Left ventricle myocardium inferior (tissue), 1 donor: ENCODE measurements at regions of chr12 and their contacts with region 1.

Region 1: DNA sequence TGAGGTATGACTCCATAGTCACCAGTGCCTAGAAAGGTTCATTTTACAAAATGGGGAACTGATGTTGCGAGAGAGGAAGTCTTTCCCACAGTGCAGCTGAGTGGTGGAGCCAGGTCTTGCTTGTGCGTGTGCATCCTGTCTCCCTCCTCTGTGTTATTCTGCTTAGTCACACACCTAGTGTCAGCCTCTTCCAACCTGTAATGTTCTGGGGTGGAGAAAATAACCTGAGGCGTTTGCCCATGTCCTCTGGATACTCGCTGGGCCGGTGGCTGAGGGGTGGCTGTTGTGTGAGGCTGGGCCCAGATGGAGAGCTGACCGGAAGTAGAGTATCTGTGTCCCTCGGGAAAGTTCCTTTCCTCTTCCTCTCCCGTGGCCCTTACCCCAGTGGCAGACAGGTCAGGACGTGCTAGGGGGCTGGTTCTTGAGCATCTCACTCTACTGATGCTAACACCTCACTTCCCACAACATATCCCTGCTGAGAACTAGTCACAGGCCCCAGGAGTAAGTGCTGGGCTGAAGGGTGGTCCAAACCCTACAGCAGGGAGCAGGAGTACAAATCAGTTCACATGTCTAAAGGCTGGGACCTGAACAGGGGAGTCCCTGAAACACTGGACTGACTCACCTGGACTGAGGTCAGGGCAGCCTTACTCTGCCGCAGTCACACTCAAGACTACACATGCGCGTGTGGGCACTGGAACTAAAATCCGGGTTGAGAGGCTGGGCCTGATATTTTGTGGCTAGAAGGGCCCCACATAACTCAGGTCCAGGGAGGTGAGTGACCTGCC is 7.0 kb downstream of the MLF2 start:
- DNase-seq: no peak
- H3K4me3 ChIP-seq: no peak overlapping the region
- H3K27ac ChIP-seq: peak overlapping the region; percentile 56
- H3K4me1 ChIP-seq: peaks cover 13% of the 10 kb centered on the region
- H3K27me3 ChIP-seq: no peaks in the 10 kb centered on the region
- CTCF ChIP-seq: no peak

Region 2: DNA sequence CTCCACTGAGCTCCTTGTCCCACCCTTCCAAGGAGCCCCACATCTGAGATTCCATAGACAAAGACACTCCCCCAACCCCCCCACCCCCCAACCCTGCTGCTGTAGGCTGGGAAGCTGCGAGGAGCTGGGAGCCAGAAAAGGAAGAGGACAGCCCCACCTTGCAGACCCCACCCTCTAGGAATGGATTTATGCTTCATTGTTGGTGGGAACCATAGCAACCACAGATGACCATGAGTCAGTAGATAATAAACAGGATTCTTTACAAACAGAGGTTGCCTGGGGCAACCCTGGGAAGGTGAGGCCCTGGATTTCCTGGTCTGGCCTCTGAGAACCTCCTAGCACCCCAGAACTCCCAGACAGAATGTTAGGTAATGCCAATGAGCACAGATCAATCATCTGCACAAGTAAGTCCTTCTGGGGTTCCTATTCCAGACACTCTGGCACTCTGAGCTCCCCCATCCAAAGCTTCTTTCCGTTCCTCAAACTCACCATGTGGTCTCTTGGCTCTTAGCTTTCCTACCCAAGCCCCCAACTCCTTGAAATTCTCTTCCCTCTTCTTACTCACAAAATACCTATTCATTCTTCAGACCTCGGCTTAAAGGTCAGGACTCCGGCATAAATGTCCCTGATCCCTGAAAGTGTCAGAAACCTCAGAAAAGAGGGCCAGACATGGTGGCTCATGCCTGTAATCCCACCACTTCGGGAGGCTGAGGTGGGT is 450.7 kb before region 1 on chr12:
- intact Hi-C with region 1: no loop called
- DNase-seq: no peak
- H3K4me3 ChIP-seq: no peak overlapping the region
- H3K27ac ChIP-seq: peak overlapping the region; percentile 77
- H3K4me1 ChIP-seq: peaks cover 27% of the 10 kb centered on the region
- H3K27me3 ChIP-seq: no peaks in the 10 kb centered on the region
- CTCF ChIP-seq: no peak

Region 3: DNA sequence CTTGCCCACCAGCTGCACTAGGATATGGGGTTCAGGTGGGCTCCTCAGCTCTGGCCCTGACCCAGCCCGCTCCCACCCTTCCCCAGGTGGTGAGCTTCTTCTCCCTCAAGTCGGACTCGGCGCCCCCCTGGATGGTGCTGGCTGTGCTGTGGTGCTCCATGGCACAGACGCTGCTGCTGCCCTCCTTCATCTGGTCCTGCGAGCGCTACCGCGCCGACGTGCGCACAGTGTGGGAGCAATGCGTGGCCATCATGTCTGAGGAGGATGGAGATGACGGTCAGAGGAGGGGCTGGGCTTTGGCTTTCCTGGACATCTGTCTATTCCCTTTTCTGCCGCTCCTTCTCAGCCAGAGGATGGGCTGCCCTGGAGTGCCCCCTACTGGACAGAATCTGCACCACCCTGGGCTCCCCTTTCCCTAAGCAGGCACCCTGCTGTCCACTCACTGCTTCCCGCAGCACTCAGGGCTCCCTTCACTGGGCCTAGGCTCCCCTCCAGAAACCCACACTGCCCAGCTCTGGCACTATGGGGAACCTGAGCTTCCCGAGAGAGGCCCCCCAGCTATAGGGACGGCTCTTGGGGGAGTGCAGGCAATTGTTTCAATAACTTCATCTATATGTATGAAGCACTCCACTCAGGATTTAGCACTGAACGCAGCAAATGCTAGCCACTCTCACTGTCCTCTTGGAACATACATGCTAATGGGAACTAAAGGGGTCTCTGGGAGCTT is 79.6 kb after region 1 on chr12:
- intact Hi-C with region 1: loop called (anchors 5 kb)
- DNase-seq: peak; percentile 87
- H3K4me3 ChIP-seq: peak overlapping the region; percentile 26
- H3K27ac ChIP-seq: no peak overlapping the region
- H3K4me1 ChIP-seq: peaks cover 63% of the 10 kb centered on the region
- H3K27me3 ChIP-seq: peaks cover 22% of the 10 kb centered on the region
- CTCF ChIP-seq: peak; percentile 95